B cell (primary cell): ENCODE measurements at regions of chr20 and their contacts with region 1.

Region 1: GRCh38 chr20:51595058-51595532 is 52.6 kb upstream of the NFATC2 start:
- DNase-seq: peak; percentile 86
- ATAC-seq: peak; percentile 92
- H3K4me3 ChIP-seq: no peak overlapping the region
- H3K4me3 Mint-ChIP-seq: peak overlapping the region; percentile 47
- H3K27ac ChIP-seq: no peak overlapping the region
- H3K27ac Mint-ChIP-seq: peak overlapping the region; percentile 60
- H3K4me1 ChIP-seq: peaks cover 17 to 19% of the 10 kb centered on the region in 2 donors
- H3K4me1 Mint-ChIP-seq: peaks cover 19% of the 10 kb centered on the region
- H3K27me3 ChIP-seq: peaks cover 0 to 12% (median 2%) of the 10 kb centered on the region in 4 experiments
- H3K27me3 Mint-ChIP-seq: peaks cover 57% of the 10 kb centered on the region
- CTCF ChIP-seq: peak; percentile 86

Region 2: DNA sequence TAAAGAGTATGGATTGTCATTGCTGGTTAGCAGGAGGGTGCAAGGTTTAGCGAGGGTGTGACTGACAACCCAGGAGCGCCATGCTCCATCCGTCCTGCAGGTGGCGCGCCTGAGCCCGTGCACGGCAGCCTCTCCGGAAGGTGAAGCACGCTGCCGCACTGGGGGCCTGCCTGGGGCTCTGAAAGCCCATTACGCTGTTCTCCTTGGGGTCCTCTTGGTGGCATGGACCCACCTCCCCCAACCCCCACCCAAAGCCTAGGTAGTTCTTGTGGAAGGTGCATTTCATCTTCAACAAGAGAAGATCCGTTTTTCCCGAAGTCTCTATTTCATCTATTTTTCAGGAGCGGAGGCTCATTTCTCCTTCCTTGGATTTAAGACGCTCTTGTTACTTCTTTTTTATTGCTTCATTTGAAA is 374.8 kb before region 1 on chr20:
- CTCF ChIA-PET with region 1: interaction called, 3 read pairs
- POLR2A ChIA-PET with region 1: no interaction called
- intact Hi-C with region 1: loop called (anchors 10 kb)
- DNase-seq: peak; percentile 30
- ATAC-seq: no peak
- H3K4me3 ChIP-seq: no peak overlapping the region
- H3K4me3 Mint-ChIP-seq: no peak overlapping the region
- H3K27ac ChIP-seq: no peak overlapping the region
- H3K27ac Mint-ChIP-seq: no peak overlapping the region
- H3K4me1 ChIP-seq: peaks cover 9 to 13% of the 10 kb centered on the region in 2 donors
- H3K4me1 Mint-ChIP-seq: peaks cover 17% of the 10 kb centered on the region
- H3K27me3 ChIP-seq: peaks cover 0 to 23% (median 11%) of the 10 kb centered on the region in 4 experiments
- H3K27me3 Mint-ChIP-seq: peaks cover 27% of the 10 kb centered on the region
- CTCF ChIP-seq: peak; percentile 68

Region 3: GRCh38 chr20:51372176-51372803 is 222.8 kb before region 1 on chr20:
- CTCF ChIA-PET with region 1: interaction called, 117 read pairs
- POLR2A ChIA-PET with region 1: interaction called, 6 read pairs
- intact Hi-C with region 1: loop called (anchors 1 kb)
- DNase-seq: peak; percentile 69
- ATAC-seq: peak; percentile 68
- H3K4me3 ChIP-seq: no peak overlapping the region
- H3K4me3 Mint-ChIP-seq: no peak overlapping the region
- H3K27ac ChIP-seq: no peak overlapping the region
- H3K27ac Mint-ChIP-seq: no peak overlapping the region
- H3K4me1 ChIP-seq: peaks cover 0 to 6% of the 10 kb centered on the region in 2 donors
- H3K4me1 Mint-ChIP-seq: peaks cover 3% of the 10 kb centered on the region
- H3K27me3 ChIP-seq: peaks cover 0 to 4% (median 0%) of the 10 kb centered on the region in 4 experiments
- H3K27me3 Mint-ChIP-seq: peaks cover 5% of the 10 kb centered on the region
- CTCF ChIP-seq: peak; percentile 75

Region 4: GRCh38 chr20:51404298-51405060 is 190.6 kb before region 1 on chr20:
- CTCF ChIA-PET with region 1: interaction called, 11 read pairs
- POLR2A ChIA-PET with region 1: no interaction called
- intact Hi-C with region 1: no loop called
- DNase-seq: peak; percentile 92
- ATAC-seq: peak; percentile 85
- H3K4me3 ChIP-seq: no peak overlapping the region
- H3K4me3 Mint-ChIP-seq: peak overlapping the region; percentile 49
- H3K27ac ChIP-seq: peak overlapping the region; percentile 86 to 97
- H3K27ac Mint-ChIP-seq: peak overlapping the region; percentile 99
- H3K4me1 ChIP-seq: peaks cover 62 to 74% of the 10 kb centered on the region in 2 donors
- H3K4me1 Mint-ChIP-seq: peaks cover 77% of the 10 kb centered on the region
- H3K27me3 ChIP-seq: no peaks in the 10 kb centered on the region
- H3K27me3 Mint-ChIP-seq: no peaks in the 10 kb centered on the region
- CTCF ChIP-seq: no peak

Region 5: GRCh38 chr20:51505566-51505965 is 89.5 kb before region 1 on chr20:
- CTCF ChIA-PET with region 1: interaction called, 10 read pairs
- POLR2A ChIA-PET with region 1: no interaction called
- intact Hi-C with region 1: no loop called
- DNase-seq: no peak
- ATAC-seq: no peak
- H3K4me3 ChIP-seq: no peak overlapping the region
- H3K4me3 Mint-ChIP-seq: no peak overlapping the region
- H3K27ac ChIP-seq: no peak overlapping the region
- H3K27ac Mint-ChIP-seq: peak overlapping the region; percentile 8
- H3K4me1 ChIP-seq: peaks cover 21 to 45% of the 10 kb centered on the region in 2 donors
- H3K4me1 Mint-ChIP-seq: peaks cover 53% of the 10 kb centered on the region
- H3K27me3 ChIP-seq: no peaks in the 10 kb centered on the region
- H3K27me3 Mint-ChIP-seq: no peaks in the 10 kb centered on the region
- CTCF ChIP-seq: no peak

Region 6: GRCh38 chr20:51624157-51624731 is 29.1 kb after region 1 on chr20:
- CTCF ChIA-PET with region 1: interaction called, 26 read pairs
- POLR2A ChIA-PET with region 1: no interaction called
- intact Hi-C with region 1: loop called (anchors 1 kb)
- DNase-seq: peak; percentile 72
- ATAC-seq: peak; percentile 67
- H3K4me3 ChIP-seq: no peak overlapping the region
- H3K4me3 Mint-ChIP-seq: no peak overlapping the region
- H3K27ac ChIP-seq: no peak overlapping the region
- H3K27ac Mint-ChIP-seq: no peak overlapping the region
- H3K4me1 ChIP-seq: peaks cover 0 to 2% of the 10 kb centered on the region in 2 donors
- H3K4me1 Mint-ChIP-seq: no peaks in the 10 kb centered on the region
- H3K27me3 ChIP-seq: peaks cover 0 to 3% (median 0%) of the 10 kb centered on the region in 4 experiments
- H3K27me3 Mint-ChIP-seq: peaks cover 12% of the 10 kb centered on the region
- CTCF ChIP-seq: peak; percentile 77

Region 7: DNA sequence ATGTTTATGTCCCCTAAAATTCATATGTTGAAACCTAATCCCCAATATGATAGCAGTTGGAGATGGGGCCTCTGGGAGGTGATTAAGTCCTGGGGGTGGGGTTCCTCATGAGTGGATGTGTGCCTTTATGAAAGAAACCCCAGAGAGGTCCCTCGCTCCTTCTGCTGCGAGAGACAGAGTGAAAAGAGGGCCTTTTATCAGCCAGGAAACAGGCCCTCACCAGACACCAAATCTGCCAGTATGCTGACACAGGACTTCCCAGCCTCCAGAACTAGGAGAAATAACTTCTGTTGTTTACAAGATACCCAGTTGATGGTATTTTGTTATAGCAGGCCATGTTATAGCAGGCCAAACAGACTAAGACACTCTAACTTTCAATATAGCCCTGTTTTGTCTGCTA is 48.3 kb after region 1 on chr20:
- CTCF ChIA-PET with region 1: no interaction called
- POLR2A ChIA-PET with region 1: no interaction called
- intact Hi-C with region 1: no loop called
- DNase-seq: no peak
- ATAC-seq: no peak
- H3K4me3 ChIP-seq: no peak overlapping the region
- H3K4me3 Mint-ChIP-seq: no peak overlapping the region
- H3K27ac ChIP-seq: no peak overlapping the region
- H3K27ac Mint-ChIP-seq: no peak overlapping the region
- H3K4me1 ChIP-seq: no peaks in the 10 kb centered on the region
- H3K4me1 Mint-ChIP-seq: peaks cover 6% of the 10 kb centered on the region
- H3K27me3 ChIP-seq: no peaks in the 10 kb centered on the region
- H3K27me3 Mint-ChIP-seq: no peaks in the 10 kb centered on the region
- CTCF ChIP-seq: no peak

Region 8: DNA sequence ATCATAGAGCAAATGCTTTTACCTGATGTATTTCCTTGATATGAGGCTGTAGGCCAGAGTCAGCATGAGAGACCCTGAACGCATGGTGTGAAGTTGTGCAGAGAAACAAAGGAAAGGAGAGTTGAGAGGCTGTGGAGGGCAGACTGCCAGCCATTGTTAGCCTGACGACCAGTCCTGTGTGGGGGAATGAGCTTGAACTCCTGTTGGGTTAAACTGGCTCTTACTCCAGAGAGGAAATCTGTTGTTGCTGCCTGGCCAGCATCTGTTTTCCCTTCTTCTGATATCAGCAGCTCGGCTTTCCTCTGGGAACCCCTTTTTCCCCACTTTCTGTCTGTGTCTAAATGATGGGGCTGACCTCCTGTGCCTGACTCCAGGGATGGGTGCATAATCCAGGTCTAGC is 754.7 kb after region 1 on chr20:
- CTCF ChIA-PET with region 1: no interaction called
- POLR2A ChIA-PET with region 1: no interaction called
- intact Hi-C with region 1: no loop called
- DNase-seq: no peak
- ATAC-seq: no peak
- H3K4me3 ChIP-seq: no peak overlapping the region
- H3K4me3 Mint-ChIP-seq: no peak overlapping the region
- H3K27ac ChIP-seq: no peak overlapping the region
- H3K27ac Mint-ChIP-seq: no peak overlapping the region
- H3K4me1 ChIP-seq: no peaks in the 10 kb centered on the region
- H3K4me1 Mint-ChIP-seq: no peaks in the 10 kb centered on the region
- H3K27me3 ChIP-seq: no peaks in the 10 kb centered on the region
- H3K27me3 Mint-ChIP-seq: peaks cover 2% of the 10 kb centered on the region
- CTCF ChIP-seq: no peak

Region 9: DNA sequence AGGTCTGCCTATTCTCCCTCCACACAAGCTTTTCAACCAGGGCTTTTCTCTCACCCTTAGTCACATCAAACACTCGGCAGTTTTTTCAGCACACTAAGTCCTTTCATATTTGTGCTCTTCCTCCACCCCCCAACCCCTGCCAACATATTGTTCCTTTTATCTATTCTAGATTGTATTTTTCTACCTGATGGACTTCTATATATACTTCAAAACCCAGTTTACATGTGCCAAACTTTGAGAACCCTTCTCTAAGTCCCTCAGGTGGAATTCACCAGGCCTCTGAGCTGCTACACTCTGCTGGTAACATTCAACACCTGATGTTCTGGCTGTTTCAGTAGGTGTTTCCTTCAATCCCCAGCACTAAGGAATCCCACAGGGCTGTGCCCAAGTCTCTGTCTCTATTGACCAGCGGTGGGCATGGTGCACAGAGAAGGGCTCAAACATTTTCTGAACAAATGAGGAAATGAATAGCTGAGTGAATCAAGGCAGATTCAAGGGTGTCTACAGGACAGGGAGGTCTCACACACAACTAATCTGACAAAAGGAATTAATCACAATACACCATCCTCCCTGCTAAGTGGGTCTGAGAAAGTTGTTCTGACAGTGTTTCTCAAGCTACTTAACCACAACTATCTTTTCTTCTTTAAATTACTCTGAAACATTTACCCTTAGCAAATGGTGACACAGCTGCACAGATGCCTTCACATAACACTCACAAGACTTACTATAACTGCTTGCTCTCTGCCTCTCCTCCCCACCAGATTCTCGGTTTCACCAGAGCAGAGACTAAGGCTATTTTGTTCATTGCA is 1543.6 kb after region 1 on chr20:
- CTCF ChIA-PET with region 1: no interaction called
- POLR2A ChIA-PET with region 1: no interaction called
- intact Hi-C with region 1: no loop called
- DNase-seq: no peak
- ATAC-seq: no peak
- H3K4me3 ChIP-seq: no peak overlapping the region
- H3K4me3 Mint-ChIP-seq: no peak overlapping the region
- H3K27ac ChIP-seq: no peak overlapping the region
- H3K27ac Mint-ChIP-seq: no peak overlapping the region
- H3K4me1 ChIP-seq: no peaks in the 10 kb centered on the region
- H3K4me1 Mint-ChIP-seq: no peaks in the 10 kb centered on the region
- H3K27me3 ChIP-seq: peaks cover 0 to 6% (median 0%) of the 10 kb centered on the region in 4 experiments
- H3K27me3 Mint-ChIP-seq: peaks cover 11% of the 10 kb centered on the region
- CTCF ChIP-seq: no peak